ENCODE measurements at regions of chr10 and their contacts with region 1.

Region 1: DNA sequence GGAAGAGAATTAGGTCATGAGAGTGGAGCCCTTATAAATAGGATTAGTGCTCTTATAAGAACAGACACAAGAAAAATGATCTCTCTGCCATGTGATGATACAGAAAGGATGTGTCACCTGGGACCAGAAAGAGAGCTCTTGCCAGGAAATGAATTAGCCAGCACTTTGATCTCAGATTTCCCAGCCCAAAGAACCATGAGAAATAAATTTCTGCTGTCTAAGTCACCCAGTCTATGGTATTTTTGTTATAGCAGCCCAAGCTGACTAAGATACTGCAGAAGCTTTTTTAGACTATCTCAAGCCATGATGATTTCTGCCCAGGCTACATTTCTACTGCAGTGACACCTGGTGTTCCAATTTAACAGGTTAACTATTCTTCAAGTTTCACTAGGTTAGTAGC is 84.8 kb downstream of the RSU1 start:
- DNase-seq: no peak
- H3K4me3 Mint-ChIP-seq: no peak overlapping the region
- H3K27ac Mint-ChIP-seq: no peak overlapping the region
- H3K4me1 Mint-ChIP-seq: peaks cover 18% of the 10 kb centered on the region
- H3K27me3 Mint-ChIP-seq: no peaks in the 10 kb centered on the region

Region 2: DNA sequence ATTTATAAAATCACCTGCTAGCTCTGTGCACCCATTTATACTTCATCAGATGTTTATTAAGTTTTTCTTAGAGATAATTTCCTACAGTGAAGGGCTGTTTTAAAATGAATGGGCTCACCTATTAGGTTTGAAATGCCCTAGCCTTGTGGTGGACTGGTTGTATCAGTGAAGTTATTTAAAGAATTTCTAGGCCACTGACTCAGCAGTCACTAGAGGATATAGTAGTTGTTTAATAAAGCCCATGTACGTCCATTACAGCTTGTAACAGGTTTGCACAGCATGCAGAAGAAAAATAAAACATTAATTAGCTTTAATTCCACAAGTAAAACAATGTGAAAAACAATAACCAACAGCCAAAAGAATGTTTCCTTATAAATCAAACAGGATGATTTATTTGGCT is 43.1 kb before region 1 on chr10:
- CTCF ChIA-PET with region 1: interaction called, 11 read pairs
- POLR2A ChIA-PET with region 1: no interaction called
- intact Hi-C with region 1: no loop called
- DNase-seq: no peak
- H3K4me3 Mint-ChIP-seq: no peak overlapping the region
- H3K27ac Mint-ChIP-seq: no peak overlapping the region
- H3K4me1 Mint-ChIP-seq: no peaks in the 10 kb centered on the region
- H3K27me3 Mint-ChIP-seq: no peaks in the 10 kb centered on the region

Region 3: DNA sequence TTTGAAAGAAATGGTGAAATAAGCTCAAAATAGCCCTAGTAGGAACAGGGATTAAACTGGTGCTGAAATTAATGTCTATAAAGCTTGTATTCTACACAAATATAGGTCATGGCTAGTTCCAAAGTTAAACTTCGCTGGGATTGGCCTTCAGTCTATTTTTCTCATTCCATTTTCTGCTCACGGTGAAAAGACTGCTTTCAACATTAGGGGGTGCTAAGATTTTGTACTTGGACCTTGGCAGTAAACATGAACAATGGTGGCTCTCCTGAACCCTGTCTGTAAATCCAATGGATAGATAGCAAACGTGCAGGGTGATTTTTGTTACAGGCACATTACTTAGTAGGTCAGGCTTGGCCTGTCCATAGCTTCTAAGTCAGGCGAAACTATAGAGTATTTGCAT is 120.8 kb after region 1 on chr10:
- CTCF ChIA-PET with region 1: no interaction called
- POLR2A ChIA-PET with region 1: no interaction called
- intact Hi-C with region 1: no loop called
- DNase-seq: no peak
- H3K4me3 Mint-ChIP-seq: no peak overlapping the region
- H3K27ac Mint-ChIP-seq: no peak overlapping the region
- H3K4me1 Mint-ChIP-seq: no peaks in the 10 kb centered on the region
- H3K27me3 Mint-ChIP-seq: no peaks in the 10 kb centered on the region

Measured in activated CD4-positive, alpha-beta memory T cell treated with anti-CD3 and anti-CD28 coated beads for 36 hours (primary cell).